IMR-90 (cell line): ENCODE measurements at regions of chr16 and their contacts with region 1.

Region 1: GRCh38 chr16:3014971-3015370 is 2.2 kb downstream of the CLDN9 start:
- DNase-seq: no peak
- ATAC-seq: no peak
- H3K4me3 ChIP-seq: no peak overlapping the region
- H3K27ac ChIP-seq: no peak overlapping the region
- H3K4me1 ChIP-seq: 0 out of 2 replicates have a peak, but pooled peaks cover 3% of the 10 kb centered on the region
- H3K27me3 ChIP-seq: peaks cover 33% of the 10 kb centered on the region
- CTCF ChIP-seq: no peak
- POLR2A ChIP-seq: no peak
- RAD21 ChIP-seq: no peak

Region 2: DNA sequence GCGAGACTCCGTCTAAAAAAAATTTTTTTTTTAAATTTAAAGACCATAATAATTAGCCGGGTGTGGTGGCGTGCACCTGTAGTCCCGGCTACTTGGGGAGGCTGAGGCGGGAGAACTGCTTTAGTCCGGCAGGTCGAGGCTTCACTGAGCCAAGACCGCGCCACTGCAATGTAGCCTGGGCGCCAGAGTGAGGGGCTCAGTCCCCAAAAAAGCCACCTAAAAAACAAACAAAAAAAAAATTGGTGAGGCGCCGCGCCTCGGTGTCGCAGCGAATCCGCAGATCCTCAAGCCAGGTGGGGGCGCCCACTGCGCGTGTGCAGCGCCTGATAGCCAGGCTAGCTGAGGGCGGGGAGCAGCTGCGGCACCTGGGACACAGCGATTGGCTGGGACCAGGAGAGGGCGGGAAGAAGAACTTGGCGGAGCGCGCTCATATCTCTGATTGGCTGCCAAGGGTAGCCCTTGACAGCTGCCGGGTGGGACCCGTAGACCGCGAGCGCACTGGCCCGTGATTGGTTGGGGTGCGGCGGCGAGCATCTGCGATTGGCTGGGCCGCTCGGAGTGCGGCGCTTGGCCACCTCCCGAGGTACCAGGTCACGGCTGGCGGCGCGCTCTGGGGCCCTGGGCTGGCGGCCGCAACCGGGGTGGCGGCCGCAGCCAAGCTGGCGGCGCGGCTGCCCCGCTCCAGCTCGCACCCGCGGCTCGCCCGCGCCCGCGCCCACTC is 11.2 kb before region 1 on chr16:
- CTCF ChIA-PET with region 1: interaction called, 12 read pairs
- POLR2A ChIA-PET with region 1: interaction called, 5 read pairs
- dilution Hi-C with region 1: no loop called
- in situ Hi-C with region 1: no loop called
- intact Hi-C with region 1: no loop called
- DNase-seq: peak; percentile 98
- ATAC-seq: peak; percentile 99
- H3K4me3 ChIP-seq: 0 out of 2 replicates have a peak overlapping the region, but pooled peaks have one; percentile 19
- H3K27ac ChIP-seq: no peak overlapping the region
- H3K4me1 ChIP-seq: no peaks in the 10 kb centered on the region
- H3K27me3 ChIP-seq: peaks cover 39% of the 10 kb centered on the region
- CTCF ChIP-seq: peak; percentile 54
- POLR2A ChIP-seq: no peak
- RAD21 ChIP-seq: peak; percentile 56

Region 3: DNA sequence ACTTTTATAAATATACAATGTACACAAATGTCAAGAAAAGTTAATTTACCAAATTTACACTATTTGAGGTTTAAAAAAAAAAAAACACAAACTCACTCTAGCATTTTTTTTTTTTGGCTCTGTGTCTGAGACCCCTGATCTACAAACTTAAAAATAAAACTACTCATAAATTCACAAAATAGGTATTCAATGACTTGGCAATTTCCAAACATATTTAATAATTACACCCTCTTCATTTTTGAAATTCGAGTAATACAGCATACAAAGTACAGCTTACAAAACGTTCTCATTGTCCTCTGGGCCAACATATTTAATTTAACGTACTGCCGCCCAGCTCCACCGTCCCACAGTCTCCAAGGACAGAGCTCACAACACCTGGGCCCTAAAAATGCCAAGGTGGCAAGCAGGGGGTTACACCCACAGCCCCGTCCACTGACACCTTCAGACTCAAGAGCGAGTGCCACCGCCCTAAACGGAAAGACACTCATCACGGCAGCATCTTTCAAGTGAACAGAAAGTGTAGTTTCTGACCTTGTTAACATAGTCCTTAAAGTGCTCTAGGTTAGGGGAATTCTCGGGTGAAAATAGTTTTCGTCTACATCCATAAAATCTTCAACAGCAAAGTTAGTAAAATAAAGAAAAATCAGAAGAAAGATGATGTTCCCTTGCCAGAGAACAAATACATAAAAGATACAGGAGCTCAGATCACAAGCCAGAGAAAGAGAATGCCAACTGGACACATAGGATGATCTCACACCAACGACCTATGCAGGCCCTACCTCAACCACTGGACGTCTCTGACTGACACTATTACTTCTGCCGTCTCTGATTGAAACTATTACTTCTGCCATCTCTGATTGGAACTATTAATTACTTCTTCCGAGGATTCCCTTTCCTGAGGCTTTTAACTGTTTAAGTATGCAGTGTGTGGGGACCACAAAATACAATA is 1097.1 kb after region 1 on chr16:
- CTCF ChIA-PET with region 1: no interaction called
- POLR2A ChIA-PET with region 1: no interaction called
- dilution Hi-C with region 1: no loop called
- in situ Hi-C with region 1: no loop called
- intact Hi-C with region 1: no loop called
- DNase-seq: peak; percentile 55
- ATAC-seq: no peak
- H3K4me3 ChIP-seq: peak overlapping the region; percentile 47
- H3K27ac ChIP-seq: peak overlapping the region; percentile 6; the same call in 1 of the 2 replicates
- H3K4me1 ChIP-seq: peaks cover 27% of the 10 kb centered on the region
- H3K27me3 ChIP-seq: no peaks in the 10 kb centered on the region
- CTCF ChIP-seq: no peak
- POLR2A ChIP-seq: no peak
- RAD21 ChIP-seq: no peak